H1 (cell line): ENCODE measurements at regions of chr3 and their contacts with region 1.

Region 1: GRCh38 chr3:17841190-17841828 is 98.9 kb upstream of the TBC1D5 start:
- DNase-seq: peak; percentile 58 to 97
- H3K4me3 ChIP-seq: no peak overlapping the region
- H3K27ac ChIP-seq: no peak overlapping the region
- H3K4me1 ChIP-seq: no peaks in the 10 kb centered on the region
- H3K27me3 ChIP-seq: no peaks in the 10 kb centered on the region
- CTCF ChIP-seq: peak; percentile 97 to 100 (median 99)
- EP300 ChIP-seq: no peak
- POLR2A ChIP-seq: no peak
- RAD21 ChIP-seq: peak; percentile 98 to 99

Region 2: DNA sequence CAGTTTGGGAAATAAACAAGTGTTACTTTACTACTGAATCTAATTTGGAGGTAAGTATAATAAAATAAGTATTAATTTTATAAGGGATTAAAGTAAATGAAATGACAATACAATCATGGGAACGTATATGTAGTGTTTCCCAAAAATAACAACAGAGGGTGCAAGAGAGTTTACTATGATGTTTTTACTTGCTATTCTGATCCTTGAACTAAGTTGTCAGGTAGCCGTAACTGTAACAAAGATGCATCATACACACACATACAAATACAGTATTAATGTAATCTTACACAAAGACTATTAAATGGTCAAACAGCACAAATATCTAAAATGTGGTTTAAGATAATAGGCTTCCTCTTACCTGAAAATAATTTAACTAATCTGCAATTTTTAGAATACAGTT is 410.3 kb before region 1 on chr3:
- CTCF ChIA-PET with region 1: interaction called, 12 read pairs
- POLR2A ChIA-PET with region 1: no interaction called
- DNase-seq: no peak
- H3K4me3 ChIP-seq: no peak overlapping the region
- H3K27ac ChIP-seq: no peak overlapping the region
- H3K4me1 ChIP-seq: peaks cover 0 to 5% (median 0%) of the 10 kb centered on the region in 4 experiments; a peak in 2 of 7 replicates
- H3K27me3 ChIP-seq: no peaks in the 10 kb centered on the region
- CTCF ChIP-seq: peak in 1 of 3 experiments; percentile 32; a peak in 1 of 4 replicates
- EP300 ChIP-seq: no peak
- POLR2A ChIP-seq: no peak
- RAD21 ChIP-seq: peak; percentile 48 to 58

Region 3: GRCh38 chr3:17645072-17645698 is 196.1 kb before region 1 on chr3:
- CTCF ChIA-PET with region 1: interaction called, 61 read pairs
- POLR2A ChIA-PET with region 1: no interaction called
- DNase-seq: no peak
- H3K4me3 ChIP-seq: no peak overlapping the region
- H3K27ac ChIP-seq: no peak overlapping the region
- H3K4me1 ChIP-seq: no peaks in the 10 kb centered on the region; a peak in 1 of 7 replicates
- H3K27me3 ChIP-seq: no peaks in the 10 kb centered on the region
- CTCF ChIP-seq: peak in 2 of 3 experiments; percentile 53 to 60; a peak in 2 of 4 replicates
- EP300 ChIP-seq: no peak
- POLR2A ChIP-seq: no peak
- RAD21 ChIP-seq: peak; percentile 60

Region 4: GRCh38 chr3:17747174-17747889 is 94.0 kb before region 1 on chr3:
- CTCF ChIA-PET with region 1: interaction called, 11 read pairs
- POLR2A ChIA-PET with region 1: no interaction called
- DNase-seq: no peak
- H3K4me3 ChIP-seq: no peak overlapping the region
- H3K27ac ChIP-seq: no peak overlapping the region
- H3K4me1 ChIP-seq: 0 out of 7 replicates have a peak, but pooled peaks cover 0 to 2% (median 0%) of the 10 kb centered on the region in 4 experiments
- H3K27me3 ChIP-seq: no peaks in the 10 kb centered on the region
- CTCF ChIP-seq: no peak
- EP300 ChIP-seq: no peak
- POLR2A ChIP-seq: no peak
- RAD21 ChIP-seq: no peak

Region 5: GRCh38 chr3:17811646-17812045 is 29.7 kb before region 1 on chr3:
- CTCF ChIA-PET with region 1: interaction called, 16 read pairs
- POLR2A ChIA-PET with region 1: interaction called, 3 read pairs
- DNase-seq: no peak
- H3K4me3 ChIP-seq: no peak overlapping the region
- H3K27ac ChIP-seq: no peak overlapping the region
- H3K4me1 ChIP-seq: no peaks in the 10 kb centered on the region
- H3K27me3 ChIP-seq: no peaks in the 10 kb centered on the region
- CTCF ChIP-seq: no peak
- EP300 ChIP-seq: no peak
- POLR2A ChIP-seq: no peak
- RAD21 ChIP-seq: no peak